ENCODE measurements at regions of chr3 and their contacts with region 1.

Region 1: DNA sequence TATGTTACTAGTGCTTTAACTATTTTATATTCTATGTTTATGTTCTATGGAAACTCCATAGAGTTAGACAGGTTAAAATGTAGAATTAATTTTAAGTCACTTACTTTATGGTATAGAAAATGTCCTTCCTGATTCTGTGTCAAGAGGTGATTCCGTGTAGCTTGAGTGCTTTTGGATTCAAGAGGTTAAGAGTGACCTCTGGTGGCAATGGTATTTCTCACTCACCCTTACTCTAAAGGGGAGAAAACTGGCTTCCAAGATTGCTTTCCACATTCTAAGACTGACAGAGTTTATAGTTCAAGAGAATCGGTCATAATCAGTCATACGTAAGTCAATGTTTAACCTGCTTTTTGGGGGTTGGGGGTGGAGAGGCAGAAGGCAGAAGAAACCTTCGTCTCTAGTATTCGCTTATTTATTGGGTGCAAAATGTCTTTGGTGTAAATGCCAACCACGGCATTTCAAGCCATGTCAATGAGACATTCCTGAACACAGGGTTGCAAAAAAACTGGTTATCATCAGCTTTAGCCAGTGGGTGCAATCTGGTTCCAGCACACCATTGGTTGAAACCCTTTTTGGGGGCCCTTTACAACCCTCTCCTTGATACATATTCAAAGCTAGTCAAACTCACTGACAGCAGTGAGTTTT is 92.0 kb upstream of the VGLL3 start:
- DNase-seq: peak in 1 of 2 experiments; percentile 54
- H3K4me3 ChIP-seq: no peak overlapping the region
- H3K4me3 Mint-ChIP-seq: no peak overlapping the region
- H3K27ac Mint-ChIP-seq: no peak overlapping the region
- H3K4me1 ChIP-seq: peaks cover 8% of the 10 kb centered on the region; the same call in 1 of the 2 replicates
- H3K4me1 Mint-ChIP-seq: no peaks in the 10 kb centered on the region
- H3K27me3 ChIP-seq: no peaks in the 10 kb centered on the region
- H3K27me3 Mint-ChIP-seq: no peaks in the 10 kb centered on the region
- CTCF ChIP-seq: peak; percentile 49 to 66

Region 2: DNA sequence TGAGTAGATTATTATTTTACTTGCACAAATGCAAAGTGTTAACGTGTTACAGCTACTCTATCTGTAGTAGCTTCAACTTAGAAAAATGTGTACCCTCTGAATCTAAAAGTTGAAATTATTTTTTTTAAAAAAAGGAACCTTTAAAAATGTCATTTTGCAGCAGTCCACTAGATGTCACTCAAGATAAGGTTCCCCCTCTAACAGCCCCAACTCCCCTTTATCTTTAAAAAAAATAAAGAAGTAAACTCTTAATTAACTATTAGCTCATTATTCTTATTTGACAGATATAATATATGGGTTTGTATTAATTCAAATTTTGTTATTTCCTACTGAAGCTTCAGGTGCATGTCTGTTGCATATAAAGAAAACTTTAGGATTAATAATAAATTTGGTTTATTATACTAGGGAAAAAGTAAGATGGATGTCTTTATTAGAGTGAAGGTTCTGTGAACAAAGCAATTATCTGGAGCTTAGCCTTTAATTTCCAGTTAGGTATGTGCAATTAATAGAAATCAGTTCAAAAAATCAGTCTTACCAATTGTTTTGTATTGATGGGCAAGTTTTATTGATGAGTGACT is 380.4 kb before region 1 on chr3:
- CTCF ChIA-PET with region 1: no interaction called
- POLR2A ChIA-PET with region 1: no interaction called
- intact Hi-C with region 1: loop called (anchors 2 kb)
- DNase-seq: no peak
- H3K4me3 ChIP-seq: no peak overlapping the region
- H3K4me3 Mint-ChIP-seq: no peak overlapping the region
- H3K27ac Mint-ChIP-seq: no peak overlapping the region
- H3K4me1 ChIP-seq: peaks cover 3% of the 10 kb centered on the region
- H3K4me1 Mint-ChIP-seq: peaks cover 13% of the 10 kb centered on the region
- H3K27me3 ChIP-seq: no peaks in the 10 kb centered on the region
- H3K27me3 Mint-ChIP-seq: no peaks in the 10 kb centered on the region
- CTCF ChIP-seq: peak; percentile 50 to 53

Region 3: GRCh38 chr3:86774082-86774691 is 308.7 kb before region 1 on chr3:
- CTCF ChIA-PET with region 1: interaction called, 4 read pairs
- POLR2A ChIA-PET with region 1: interaction called, 3 read pairs
- intact Hi-C with region 1: loop called (anchors 1 kb)
- DNase-seq: peak in 1 of 2 experiments; percentile 7
- H3K4me3 ChIP-seq: no peak overlapping the region
- H3K4me3 Mint-ChIP-seq: no peak overlapping the region
- H3K27ac Mint-ChIP-seq: no peak overlapping the region
- H3K4me1 ChIP-seq: no peaks in the 10 kb centered on the region
- H3K4me1 Mint-ChIP-seq: peaks cover 4% of the 10 kb centered on the region
- H3K27me3 ChIP-seq: no peaks in the 10 kb centered on the region; the same call in 1 of the 2 replicates
- H3K27me3 Mint-ChIP-seq: no peaks in the 10 kb centered on the region
- CTCF ChIP-seq: peak; percentile 35 to 56

Region 4: DNA sequence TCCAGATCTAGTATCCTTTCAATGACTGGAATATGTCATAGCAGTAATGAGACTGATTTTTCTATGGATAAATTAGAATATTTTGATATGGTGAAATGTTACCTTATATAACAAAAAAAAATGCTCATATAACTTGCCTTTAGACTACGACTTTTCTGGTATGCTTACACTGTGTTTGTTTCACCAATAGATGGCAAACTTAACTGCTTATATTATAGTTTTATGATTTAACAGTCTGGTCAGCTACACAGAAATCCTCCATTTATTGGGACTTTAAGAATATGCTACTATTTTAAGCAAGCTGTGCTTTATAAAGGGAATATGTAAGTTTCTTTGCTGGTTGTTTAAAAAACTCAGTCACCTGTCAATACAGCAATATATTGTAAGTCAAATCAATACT is 297.5 kb before region 1 on chr3:
- CTCF ChIA-PET with region 1: no interaction called
- POLR2A ChIA-PET with region 1: no interaction called
- intact Hi-C with region 1: loop called (anchors 1 kb)
- DNase-seq: no peak
- H3K4me3 ChIP-seq: no peak overlapping the region
- H3K4me3 Mint-ChIP-seq: no peak overlapping the region
- H3K27ac Mint-ChIP-seq: no peak overlapping the region
- H3K4me1 ChIP-seq: no peaks in the 10 kb centered on the region
- H3K4me1 Mint-ChIP-seq: no peaks in the 10 kb centered on the region
- H3K27me3 ChIP-seq: no peaks in the 10 kb centered on the region
- H3K27me3 Mint-ChIP-seq: no peaks in the 10 kb centered on the region
- CTCF ChIP-seq: no peak

Region 5: GRCh38 chr3:86969500-86970189 is 113.3 kb before region 1 on chr3:
- CTCF ChIA-PET with region 1: no interaction called
- POLR2A ChIA-PET with region 1: no interaction called
- intact Hi-C with region 1: loop called (anchors 1 kb)
- DNase-seq: peak in 1 of 2 experiments; percentile 36
- H3K4me3 ChIP-seq: no peak overlapping the region
- H3K4me3 Mint-ChIP-seq: no peak overlapping the region
- H3K27ac Mint-ChIP-seq: no peak overlapping the region
- H3K4me1 ChIP-seq: peaks cover 25% of the 10 kb centered on the region
- H3K4me1 Mint-ChIP-seq: peaks cover 21% of the 10 kb centered on the region
- H3K27me3 ChIP-seq: no peaks in the 10 kb centered on the region
- H3K27me3 Mint-ChIP-seq: no peaks in the 10 kb centered on the region
- CTCF ChIP-seq: peak; percentile 41 to 51

Region 6: DNA sequence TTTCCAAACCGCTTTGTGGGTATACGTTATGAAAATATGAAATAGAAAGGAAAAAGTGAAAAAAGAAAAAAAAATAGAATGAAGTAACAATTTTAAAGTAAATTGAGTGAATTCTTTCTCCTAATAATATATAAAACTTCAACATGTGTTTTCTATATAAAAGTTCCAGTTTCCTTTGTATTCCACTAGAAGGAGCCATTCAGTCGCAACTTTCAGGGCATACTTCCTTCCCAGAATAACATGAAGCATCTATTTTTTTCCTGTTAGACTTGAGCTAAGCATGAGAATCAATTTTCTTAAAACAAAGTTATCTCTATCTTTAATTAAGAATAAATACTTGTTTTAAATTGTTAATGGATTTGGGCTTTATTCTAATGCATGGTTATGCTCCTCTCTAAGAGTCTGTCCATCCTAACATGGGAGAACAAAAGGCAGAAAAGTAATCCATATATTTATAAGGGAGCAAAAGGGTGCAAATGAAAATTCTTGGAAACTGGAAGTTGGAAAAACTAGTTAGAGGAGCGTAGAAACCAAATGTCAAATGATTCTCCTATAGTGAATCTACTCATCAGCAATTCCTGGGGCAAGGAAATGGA is 76.0 kb before region 1 on chr3:
- CTCF ChIA-PET with region 1: no interaction called
- POLR2A ChIA-PET with region 1: no interaction called
- intact Hi-C with region 1: loop called (anchors 1 kb)
- DNase-seq: no peak
- H3K4me3 ChIP-seq: no peak overlapping the region
- H3K4me3 Mint-ChIP-seq: no peak overlapping the region
- H3K27ac Mint-ChIP-seq: no peak overlapping the region
- H3K4me1 ChIP-seq: no peaks in the 10 kb centered on the region
- H3K4me1 Mint-ChIP-seq: no peaks in the 10 kb centered on the region
- H3K27me3 ChIP-seq: no peaks in the 10 kb centered on the region
- H3K27me3 Mint-ChIP-seq: peaks cover 6% of the 10 kb centered on the region
- CTCF ChIP-seq: peak; percentile 18 to 47

Region 7: DNA sequence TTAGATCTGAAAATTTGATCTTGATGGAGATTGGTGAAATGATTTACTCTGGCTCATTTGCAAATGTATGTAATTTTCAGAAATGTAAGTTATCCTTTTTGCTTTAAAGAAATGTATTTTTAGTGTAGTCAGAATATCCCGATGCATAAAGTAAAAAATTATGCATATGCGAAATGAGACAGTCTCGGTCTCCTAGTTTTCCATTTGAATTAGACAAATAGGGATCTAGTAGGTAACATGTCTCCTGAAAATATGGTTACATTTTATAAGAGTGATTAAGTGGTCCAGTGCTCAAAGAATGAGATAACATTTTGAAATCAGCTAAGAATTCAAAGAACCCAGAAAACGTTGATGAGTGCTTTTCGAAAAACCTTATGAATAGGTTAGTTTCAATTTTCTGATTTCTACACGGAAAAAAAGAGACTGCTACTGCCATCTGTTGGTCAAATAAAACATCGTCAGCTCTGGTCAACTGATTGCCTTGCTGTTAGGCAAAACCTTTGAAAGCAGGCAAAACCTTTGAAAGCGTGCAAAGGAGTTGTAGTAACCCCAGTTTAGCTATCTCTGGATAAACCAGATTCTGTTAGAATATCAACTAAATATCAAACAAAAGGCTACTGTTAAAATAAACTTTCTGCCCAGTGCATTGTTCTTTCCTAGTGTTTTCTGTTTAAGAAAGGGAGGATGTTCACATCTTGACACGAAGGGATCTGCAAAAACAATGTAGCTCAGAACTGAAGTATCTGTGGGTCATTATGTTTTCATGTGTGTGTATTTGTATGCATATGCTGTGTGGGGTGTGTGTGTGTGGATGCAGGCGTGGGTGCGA is 84.9 kb after region 1 on chr3:
- CTCF ChIA-PET with region 1: no interaction called
- POLR2A ChIA-PET with region 1: no interaction called
- intact Hi-C with region 1: loop called (anchors 5 kb)
- DNase-seq: peak in 1 of 2 experiments; percentile 53
- H3K4me3 ChIP-seq: no peak overlapping the region
- H3K4me3 Mint-ChIP-seq: no peak overlapping the region
- H3K27ac Mint-ChIP-seq: no peak overlapping the region
- H3K4me1 ChIP-seq: peaks cover 8% of the 10 kb centered on the region; the same call in 1 of the 2 replicates
- H3K4me1 Mint-ChIP-seq: no peaks in the 10 kb centered on the region
- H3K27me3 ChIP-seq: no peaks in the 10 kb centered on the region
- H3K27me3 Mint-ChIP-seq: peaks cover 6% of the 10 kb centered on the region
- CTCF ChIP-seq: peak; percentile 41 to 48

Measured in Caco-2 (cell line).